ENCODE measurements at regions of chr10 and their contacts with region 1.

Region 1: GRCh38 chr10:93376372-93377293 is 105.5 kb downstream of the MYOF start:
- DNase-seq: peak in 6 of 9 experiments; percentile 22 to 80 (median 39)
- ATAC-seq: peak; percentile 83
- H3K4me3 ChIP-seq: no peak overlapping the region
- H3K4me3 Mint-ChIP-seq: no peak overlapping the region
- H3K27ac ChIP-seq: no peak overlapping the region
- H3K27ac Mint-ChIP-seq: no peak overlapping the region
- H3K4me1 ChIP-seq: no peaks in the 10 kb centered on the region
- H3K4me1 Mint-ChIP-seq: no peaks in the 10 kb centered on the region
- H3K27me3 ChIP-seq: no peaks in the 10 kb centered on the region
- H3K27me3 Mint-ChIP-seq: peaks cover 12% of the 10 kb centered on the region
- CTCF ChIP-seq: peak; percentile 90

Region 2: DNA sequence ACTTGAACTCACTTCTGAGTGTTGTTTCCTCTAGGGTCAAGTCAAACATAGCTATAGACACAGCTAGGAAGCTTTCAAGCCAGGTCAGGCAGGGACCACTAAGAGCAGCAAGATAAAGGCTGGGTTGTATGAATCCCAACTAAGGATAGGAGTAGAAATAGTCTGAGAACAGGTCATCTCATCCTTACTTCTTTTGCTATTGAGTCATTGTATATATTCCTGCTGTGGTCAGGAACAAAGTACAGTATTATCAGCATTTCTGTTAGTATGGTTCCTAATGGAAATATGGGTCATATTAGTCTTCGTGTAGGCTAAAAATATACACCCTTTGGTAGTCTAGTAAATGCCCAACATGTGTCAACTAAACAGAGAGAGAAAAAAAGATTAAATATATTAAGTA is 1307.7 kb before region 1 on chr10:
- CTCF ChIA-PET with region 1: no interaction called
- POLR2A ChIA-PET with region 1: no interaction called
- intact Hi-C with region 1: no loop called
- DNase-seq: no peak
- ATAC-seq: no peak
- H3K4me3 ChIP-seq: no peak overlapping the region
- H3K4me3 Mint-ChIP-seq: no peak overlapping the region
- H3K27ac ChIP-seq: no peak overlapping the region
- H3K27ac Mint-ChIP-seq: no peak overlapping the region
- H3K4me1 ChIP-seq: no peaks in the 10 kb centered on the region
- H3K4me1 Mint-ChIP-seq: no peaks in the 10 kb centered on the region
- H3K27me3 ChIP-seq: no peaks in the 10 kb centered on the region
- H3K27me3 Mint-ChIP-seq: no peaks in the 10 kb centered on the region
- CTCF ChIP-seq: no peak

Region 3: GRCh38 chr10:93199191-93199751 is 177.4 kb before region 1 on chr10:
- CTCF ChIA-PET with region 1: no interaction called
- POLR2A ChIA-PET with region 1: no interaction called
- intact Hi-C with region 1: no loop called
- DNase-seq: peak in 1 of 9 experiments; percentile 6
- ATAC-seq: no peak
- H3K4me3 ChIP-seq: no peak overlapping the region
- H3K4me3 Mint-ChIP-seq: no peak overlapping the region
- H3K27ac ChIP-seq: no peak overlapping the region
- H3K27ac Mint-ChIP-seq: no peak overlapping the region
- H3K4me1 ChIP-seq: no peaks in the 10 kb centered on the region
- H3K4me1 Mint-ChIP-seq: peaks cover 12% of the 10 kb centered on the region
- H3K27me3 ChIP-seq: no peaks in the 10 kb centered on the region
- H3K27me3 Mint-ChIP-seq: peaks cover 20% of the 10 kb centered on the region
- CTCF ChIP-seq: no peak

Region 4: DNA sequence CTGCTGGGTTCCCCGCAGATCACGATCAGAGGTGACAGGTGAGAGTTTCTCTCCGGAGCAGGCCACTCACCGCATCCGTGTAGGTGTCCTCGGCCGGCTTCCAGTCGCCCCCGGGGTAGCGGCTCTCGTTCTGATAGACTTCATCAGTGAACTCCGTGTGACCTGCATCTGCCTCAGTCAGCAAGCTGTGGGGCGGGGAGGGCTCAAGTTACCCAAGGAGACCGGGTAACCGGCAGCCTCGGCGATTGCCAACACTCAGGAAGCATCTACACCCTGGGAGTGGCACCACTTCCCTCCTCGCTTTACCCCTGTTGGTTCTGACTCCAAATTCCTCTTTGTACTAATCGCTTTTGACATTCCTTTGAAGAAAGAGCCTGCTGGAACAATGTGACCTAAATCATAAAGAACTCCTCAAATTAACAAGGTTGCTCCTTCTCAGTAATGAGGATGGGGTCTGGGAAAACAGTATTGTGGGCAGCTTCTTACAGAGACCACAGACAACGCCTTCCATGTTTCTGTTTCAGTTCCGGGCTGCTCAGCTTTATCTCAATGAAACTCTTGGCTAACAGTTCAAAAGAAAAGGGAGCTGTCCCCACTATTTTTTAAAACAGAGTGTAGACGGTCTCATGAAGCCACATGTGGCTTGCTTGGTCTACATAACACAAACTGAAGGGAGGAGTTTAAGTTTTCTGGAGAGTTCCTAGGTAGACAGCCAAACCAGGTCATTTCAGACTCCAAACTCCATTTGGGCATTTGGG is 12.6 kb before region 1 on chr10:
- CTCF ChIA-PET with region 1: interaction called, 50 read pairs
- POLR2A ChIA-PET with region 1: no interaction called
- intact Hi-C with region 1: no loop called
- DNase-seq: no peak
- ATAC-seq: no peak
- H3K4me3 ChIP-seq: no peak overlapping the region
- H3K4me3 Mint-ChIP-seq: no peak overlapping the region
- H3K27ac ChIP-seq: no peak overlapping the region
- H3K27ac Mint-ChIP-seq: no peak overlapping the region
- H3K4me1 ChIP-seq: no peaks in the 10 kb centered on the region
- H3K4me1 Mint-ChIP-seq: no peaks in the 10 kb centered on the region
- H3K27me3 ChIP-seq: no peaks in the 10 kb centered on the region
- H3K27me3 Mint-ChIP-seq: peaks cover 6% of the 10 kb centered on the region
- CTCF ChIP-seq: no peak

Region 5: DNA sequence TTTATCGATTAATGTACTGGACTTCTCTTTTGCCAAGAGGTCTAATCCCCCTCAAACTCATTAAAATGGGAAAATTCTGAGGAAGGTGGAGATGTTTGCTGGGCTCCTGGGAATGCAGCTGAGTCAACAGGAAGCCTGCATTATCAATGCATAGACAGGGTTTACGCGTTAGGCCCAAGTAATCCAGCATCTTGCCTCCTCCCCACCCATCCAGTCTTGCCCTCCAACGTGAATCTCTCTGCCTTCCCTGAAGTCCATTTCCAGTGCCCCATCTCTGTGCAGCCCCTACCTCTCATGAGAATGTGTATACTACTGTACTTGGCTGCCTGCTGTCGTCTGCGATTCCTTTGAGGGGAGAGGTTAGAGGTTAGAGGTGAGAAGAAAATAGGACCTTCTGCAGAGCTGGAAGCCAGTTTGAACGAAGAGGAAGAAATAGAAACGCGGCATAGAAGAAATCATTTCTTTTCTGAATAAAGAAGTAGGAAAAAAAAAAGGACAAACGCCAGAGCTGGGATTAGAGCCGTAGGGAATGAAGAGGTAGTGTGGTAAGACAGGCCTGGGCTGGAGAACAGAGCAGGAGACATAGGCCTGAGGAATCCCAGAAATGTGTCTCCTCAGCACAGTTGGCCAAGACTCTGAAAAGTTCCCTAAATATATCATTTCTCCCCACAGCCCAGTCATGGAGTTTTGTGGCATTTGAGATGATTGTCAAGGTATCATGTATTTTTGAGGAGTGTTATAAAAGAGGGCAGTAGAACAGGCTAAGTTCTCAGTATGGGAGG is 29.9 kb after region 1 on chr10:
- CTCF ChIA-PET with region 1: interaction called, 43 read pairs
- POLR2A ChIA-PET with region 1: interaction called, 3 read pairs
- intact Hi-C with region 1: no loop called
- DNase-seq: peak in 1 of 9 experiments; percentile 13
- ATAC-seq: no peak
- H3K4me3 ChIP-seq: no peak overlapping the region
- H3K4me3 Mint-ChIP-seq: no peak overlapping the region
- H3K27ac ChIP-seq: no peak overlapping the region
- H3K27ac Mint-ChIP-seq: no peak overlapping the region
- H3K4me1 ChIP-seq: peaks cover 29% of the 10 kb centered on the region
- H3K4me1 Mint-ChIP-seq: peaks cover 25% of the 10 kb centered on the region
- H3K27me3 ChIP-seq: no peaks in the 10 kb centered on the region
- H3K27me3 Mint-ChIP-seq: peaks cover 3% of the 10 kb centered on the region
- CTCF ChIP-seq: no peak

Region 6: GRCh38 chr10:93461807-93462178 is 85.2 kb after region 1 on chr10:
- CTCF ChIA-PET with region 1: interaction called, 25 read pairs
- POLR2A ChIA-PET with region 1: no interaction called
- intact Hi-C with region 1: no loop called
- DNase-seq: no peak
- ATAC-seq: no peak
- H3K4me3 ChIP-seq: no peak overlapping the region
- H3K4me3 Mint-ChIP-seq: no peak overlapping the region
- H3K27ac ChIP-seq: no peak overlapping the region
- H3K27ac Mint-ChIP-seq: no peak overlapping the region
- H3K4me1 ChIP-seq: no peaks in the 10 kb centered on the region
- H3K4me1 Mint-ChIP-seq: peaks cover 4% of the 10 kb centered on the region
- H3K27me3 ChIP-seq: no peaks in the 10 kb centered on the region
- H3K27me3 Mint-ChIP-seq: peaks cover 4% of the 10 kb centered on the region
- CTCF ChIP-seq: no peak

Region 7: GRCh38 chr10:93515071-93516005 is 138.7 kb after region 1 on chr10:
- CTCF ChIA-PET with region 1: interaction called, 119 read pairs
- POLR2A ChIA-PET with region 1: no interaction called
- intact Hi-C with region 1: loop called (anchors 1 kb)
- DNase-seq: no peak
- ATAC-seq: no peak
- H3K4me3 ChIP-seq: no peak overlapping the region
- H3K4me3 Mint-ChIP-seq: no peak overlapping the region
- H3K27ac ChIP-seq: no peak overlapping the region
- H3K27ac Mint-ChIP-seq: no peak overlapping the region
- H3K4me1 ChIP-seq: no peaks in the 10 kb centered on the region
- H3K4me1 Mint-ChIP-seq: no peaks in the 10 kb centered on the region
- H3K27me3 ChIP-seq: no peaks in the 10 kb centered on the region
- H3K27me3 Mint-ChIP-seq: peaks cover 2% of the 10 kb centered on the region
- CTCF ChIP-seq: no peak

Region 8: DNA sequence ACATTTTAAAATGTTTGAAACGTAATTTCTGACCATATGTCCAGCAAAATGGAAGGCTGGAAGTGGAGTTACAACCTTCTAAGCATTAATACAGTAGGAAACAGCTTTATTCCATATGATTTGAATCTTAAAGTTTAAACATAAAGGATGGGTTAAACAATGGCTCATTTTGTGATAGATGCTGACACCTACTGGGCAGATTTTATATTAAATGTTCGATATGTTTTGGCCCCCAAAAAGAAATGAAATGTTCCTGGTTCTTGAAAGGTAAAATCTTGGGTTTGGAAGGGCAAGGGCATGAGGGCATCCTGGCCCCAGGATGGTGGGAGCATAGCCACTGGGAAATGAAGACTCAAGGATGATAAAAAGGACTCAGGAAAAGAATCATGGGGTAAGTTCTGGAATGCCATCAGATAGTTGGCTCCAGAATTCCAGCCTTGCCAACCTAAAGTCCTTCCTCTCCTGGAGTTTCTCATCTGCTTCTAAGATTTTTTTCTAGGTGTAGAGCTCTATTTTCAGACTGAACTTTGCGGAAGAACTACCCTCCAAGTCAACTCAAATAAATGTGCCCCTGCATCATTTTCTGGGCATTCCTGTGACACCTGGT is 482.5 kb after region 1 on chr10:
- CTCF ChIA-PET with region 1: no interaction called
- POLR2A ChIA-PET with region 1: no interaction called
- intact Hi-C with region 1: loop called (anchors 5 to 10 kb)
- DNase-seq: peak in 2 of 9 experiments; percentile 7 to 22
- ATAC-seq: no peak
- H3K4me3 ChIP-seq: no peak overlapping the region
- H3K4me3 Mint-ChIP-seq: no peak overlapping the region
- H3K27ac ChIP-seq: no peak overlapping the region
- H3K27ac Mint-ChIP-seq: no peak overlapping the region
- H3K4me1 ChIP-seq: no peaks in the 10 kb centered on the region
- H3K4me1 Mint-ChIP-seq: no peaks in the 10 kb centered on the region
- H3K27me3 ChIP-seq: no peaks in the 10 kb centered on the region
- H3K27me3 Mint-ChIP-seq: peaks cover 3% of the 10 kb centered on the region
- CTCF ChIP-seq: no peak

Measured in CD8-positive, alpha-beta T cell (primary cell).